Heart right ventricle (tissue), 16 donors: ENCODE measurements at regions of chr18 and their contacts with region 1.

Region 1: GRCh38 chr18:74495581-74496507 is at the start of gene CNDP2:
- DNase-seq: peak; percentile 100
- ATAC-seq: peak; percentile 96 to 99 (median 97)
- H3K4me3 ChIP-seq: peak within 1 kb of the TSS; percentile 61 to 99 (median 87)
- H3K27ac ChIP-seq: peak within 1 kb of the TSS; percentile 78 to 98 (median 94)
- H3K4me1 ChIP-seq: peaks cover 0 to 56% (median 33%) of the 10 kb centered on the region in 9 donors
- H3K27me3 ChIP-seq: no peaks in the 10 kb centered on the region
- CTCF ChIP-seq: no peak
- total RNA-seq, gene CNDP2: 50.2 to 117 (median 75.3) TPM

Region 2: DNA sequence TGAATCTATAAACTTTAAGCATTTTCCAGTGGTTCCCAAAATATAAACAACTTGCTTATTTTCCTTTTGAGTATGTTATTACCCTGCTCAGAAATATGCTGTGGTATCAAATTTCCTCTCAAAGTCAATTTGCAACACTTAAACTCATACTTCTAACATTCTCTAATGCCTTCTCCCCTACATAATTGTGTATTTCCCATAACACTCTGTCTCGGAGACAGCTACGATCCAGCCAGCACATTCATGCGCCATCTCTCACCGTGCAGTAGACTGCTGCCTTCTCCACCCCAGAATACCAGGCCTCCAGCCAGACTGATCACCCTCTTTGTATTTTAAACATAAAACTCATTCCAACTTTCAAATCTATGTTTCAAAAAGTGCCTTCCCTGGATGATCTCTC is 305.8 kb before region 1 on chr18:
- intact Hi-C with region 1: loop called in 4 of 10 experiments (anchors 5 to 10 kb)
- DNase-seq: no peak
- ATAC-seq: peak in 1 of 8 donors; percentile 42
- H3K4me3 ChIP-seq: no peak overlapping the region
- H3K27ac ChIP-seq: no peak overlapping the region
- H3K4me1 ChIP-seq: no peaks in the 10 kb centered on the region
- H3K27me3 ChIP-seq: peaks cover 0 to 30% (median 7%) of the 10 kb centered on the region in 7 donors
- CTCF ChIP-seq: no peak

Region 3: GRCh38 chr18:74353169-74353775 is 142.6 kb before region 1 on chr18:
- intact Hi-C with region 1: loop called in 9 of 10 experiments (anchors 1 to 5 kb)
- DNase-seq: peak; percentile 23 to 78
- ATAC-seq: peak; percentile 87 to 94 (median 90)
- H3K4me3 ChIP-seq: no peak overlapping the region
- H3K27ac ChIP-seq: no peak overlapping the region
- H3K4me1 ChIP-seq: peaks cover 0 to 17% (median 5%) of the 10 kb centered on the region in 9 donors
- H3K27me3 ChIP-seq: peaks cover 0 to 3% (median 0%) of the 10 kb centered on the region in 7 donors
- CTCF ChIP-seq: peak; percentile 59 to 91 (median 82)

Region 4: DNA sequence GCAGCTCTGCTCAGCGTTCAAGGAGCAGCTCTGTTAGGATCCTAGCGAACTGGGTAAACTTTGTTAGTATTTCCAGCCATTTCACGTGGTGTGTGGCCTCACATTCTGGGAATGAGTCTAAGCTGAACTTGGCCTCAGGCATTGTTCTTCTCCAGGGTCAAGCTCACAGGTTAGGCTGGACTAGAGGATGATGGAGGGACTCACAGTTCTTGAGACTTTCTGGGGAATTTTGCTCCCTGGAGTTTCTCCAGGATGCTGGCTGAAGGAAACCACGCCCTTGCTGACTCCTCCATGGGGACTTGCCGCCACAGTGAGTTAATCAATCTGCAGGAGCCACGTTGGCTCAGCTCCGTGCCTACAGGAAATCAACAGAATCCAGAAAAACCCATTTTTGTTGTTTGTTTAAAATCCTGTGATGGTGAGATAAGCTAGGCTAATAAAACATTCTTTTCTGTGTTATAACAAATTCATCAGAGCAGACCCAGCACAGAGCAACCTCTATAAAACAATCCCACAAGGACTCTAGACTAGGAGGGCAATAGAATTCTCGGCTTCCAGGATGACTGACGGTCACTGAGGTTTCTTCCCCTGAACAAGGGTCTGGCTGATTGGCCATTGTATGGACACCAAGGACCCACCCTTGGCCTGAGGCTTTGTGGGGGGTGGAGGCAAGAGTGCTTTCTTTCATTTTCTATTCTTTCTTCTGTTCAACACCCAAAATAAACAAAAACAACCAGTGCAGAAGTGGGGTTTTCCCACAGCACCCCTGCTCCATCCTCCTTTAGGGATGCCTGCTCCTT is 51.1 kb after region 1 on chr18:
- intact Hi-C with region 1: loop called in 7 of 10 experiments (anchors 1 to 10 kb)
- DNase-seq: peak; percentile 39 to 75
- ATAC-seq: peak; percentile 59 to 84 (median 76)
- H3K4me3 ChIP-seq: no peak overlapping the region
- H3K27ac ChIP-seq: peak overlapping the region; percentile 67 to 93 (median 86)
- H3K4me1 ChIP-seq: peaks cover 7 to 60% (median 30%) of the 10 kb centered on the region in 9 donors
- H3K27me3 ChIP-seq: no peaks in the 10 kb centered on the region
- CTCF ChIP-seq: no peak

Region 5: DNA sequence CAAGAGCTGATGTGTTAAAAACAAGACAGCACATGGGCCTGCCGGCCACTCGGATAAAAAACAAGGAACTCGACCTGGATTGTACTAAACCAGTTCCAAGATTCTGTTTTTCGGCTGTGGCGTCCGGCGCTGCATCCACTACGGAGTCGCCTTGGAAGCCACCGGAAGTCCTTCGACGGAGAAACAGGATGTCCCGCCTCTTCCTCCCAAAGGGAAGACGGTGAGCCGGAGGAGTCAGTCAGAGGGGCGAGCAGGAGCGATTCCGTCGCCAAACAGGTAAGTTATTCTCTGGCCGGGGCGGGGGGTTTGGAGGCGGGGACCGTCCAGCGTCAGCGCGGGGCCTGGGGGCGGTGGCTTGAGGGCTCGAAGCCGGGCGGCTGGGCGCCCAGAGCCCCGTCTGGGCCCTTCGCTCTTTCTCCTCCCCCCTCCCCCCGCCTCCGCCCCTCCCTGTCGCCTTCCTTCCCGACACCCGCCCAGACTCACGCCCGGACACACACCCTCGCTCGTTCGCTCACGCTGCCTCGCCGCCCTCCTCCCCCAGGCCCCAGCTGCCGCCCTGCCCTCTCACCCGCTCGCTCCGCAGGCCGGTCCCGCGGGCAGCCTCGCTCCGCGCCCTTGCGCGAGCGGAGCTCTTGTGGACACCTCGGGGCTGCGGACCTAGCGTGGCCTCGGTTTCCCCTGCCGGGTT is 102.0 kb after region 1 on chr18 and contains the start of gene ZNF407:
- intact Hi-C with region 1: loop called in 3 of 10 experiments (anchors 5 kb)
- DNase-seq: peak; percentile 85 to 93
- ATAC-seq: peak; percentile 90 to 96 (median 93)
- H3K4me3 ChIP-seq: peak within 1 kb of the TSS; percentile 53 to 98 (median 94)
- H3K27ac ChIP-seq: peak within 1 kb of the TSS; percentile 96 to 100 (median 99)
- H3K4me1 ChIP-seq: peaks cover 0 to 46% (median 37%) of the 10 kb centered on the region in 9 donors
- H3K27me3 ChIP-seq: no peaks in the 10 kb centered on the region
- CTCF ChIP-seq: no peak
- total RNA-seq, gene ZNF407: 8.7 to 14.9 (median 12.9) TPM

Region 6: GRCh38 chr18:74652392-74652988 is 156.6 kb after region 1 on chr18:
- intact Hi-C with region 1: no loop called
- DNase-seq: no peak
- ATAC-seq: peak in 2 of 8 donors; percentile 27 to 37
- H3K4me3 ChIP-seq: no peak overlapping the region
- H3K27ac ChIP-seq: no peak overlapping the region
- H3K4me1 ChIP-seq: peaks cover 0 to 4% (median 0%) of the 10 kb centered on the region in 9 donors
- H3K27me3 ChIP-seq: no peaks in the 10 kb centered on the region
- CTCF ChIP-seq: peak; percentile 41 to 76 (median 65)